Activated CD4-positive, alpha-beta memory T cell treated with anti-CD3 and anti-CD28 coated beads, Interleukin-2, amount 10 ng/mL, durations not matched to agents 7 days and 5 days (primary cell): ENCODE measurements at regions of chr16 and their contacts with region 1.

Region 1: DNA sequence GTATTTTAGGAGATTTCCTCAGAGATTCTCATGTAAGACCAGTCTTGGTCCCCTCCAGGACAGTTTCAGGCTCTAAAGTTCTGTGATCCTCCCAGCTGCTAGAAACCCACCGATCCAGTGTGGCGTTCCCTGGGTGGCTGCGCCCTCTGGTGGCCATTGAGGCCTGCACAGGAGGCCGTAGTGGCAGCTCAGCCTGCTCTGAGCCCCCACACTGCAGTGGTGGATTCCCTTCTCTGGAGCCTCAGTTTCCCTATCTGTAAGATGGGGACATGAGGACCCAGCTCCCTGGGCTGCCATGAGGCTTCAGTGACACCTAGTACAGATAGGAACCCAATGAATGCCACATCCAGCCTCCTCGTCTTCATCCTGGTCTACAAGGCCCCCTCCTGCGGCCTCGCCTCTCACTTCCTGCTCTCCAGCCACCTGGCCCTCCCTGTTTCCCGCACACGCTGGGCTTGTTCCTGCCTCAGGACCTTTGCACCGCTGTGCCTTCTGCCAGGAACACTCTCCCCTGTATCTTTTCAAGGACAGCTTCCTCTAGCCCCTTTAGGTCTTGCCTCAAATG is 16.5 kb downstream of the CCDC102A start:
- DNase-seq: peak; percentile 81
- H3K4me3 Mint-ChIP-seq: no peak overlapping the region
- H3K27ac Mint-ChIP-seq: no peak overlapping the region
- H3K4me1 Mint-ChIP-seq: peaks cover 17% of the 10 kb centered on the region
- H3K27me3 Mint-ChIP-seq: no peaks in the 10 kb centered on the region

Region 2: DNA sequence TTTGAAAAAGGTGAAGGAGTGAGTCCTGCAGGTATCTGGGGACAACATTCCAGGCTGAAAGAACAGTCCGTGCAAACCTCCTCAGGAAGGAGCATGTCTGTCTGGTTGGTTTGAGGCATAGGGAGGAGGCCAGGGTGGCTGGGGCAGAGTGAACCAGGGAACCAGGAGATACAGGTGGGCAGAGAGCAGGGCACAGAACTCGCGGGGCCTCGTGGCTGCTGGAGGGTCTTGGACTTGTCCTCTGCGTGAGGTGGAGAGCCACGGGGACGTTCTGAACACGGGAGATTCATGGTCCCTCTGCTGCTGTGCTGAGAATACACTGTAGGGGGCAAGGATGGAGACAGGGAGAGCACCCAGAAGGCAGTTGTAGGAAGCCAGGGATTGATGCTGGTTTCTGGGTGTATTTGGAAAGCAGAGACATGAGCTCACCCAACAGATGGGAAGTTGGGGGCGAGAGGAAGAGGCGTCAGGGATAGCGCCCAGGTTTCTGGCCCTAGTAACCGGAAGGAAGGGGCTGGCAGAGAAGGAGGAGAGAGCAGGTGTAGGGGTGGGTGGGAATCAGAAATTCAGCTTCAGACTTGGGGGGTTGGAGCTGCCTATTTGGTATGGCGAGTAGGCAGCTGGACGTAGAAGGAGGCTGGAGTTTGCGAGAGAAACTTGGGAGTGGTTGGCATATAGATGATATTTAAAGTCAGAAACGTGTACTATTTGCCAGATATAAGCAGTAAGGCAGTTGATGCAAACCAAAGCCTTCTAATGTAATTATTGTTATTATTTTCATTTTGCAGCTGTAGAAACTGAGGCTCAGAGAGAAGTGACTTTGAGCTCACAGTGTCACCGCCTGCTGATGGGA is 115.7 kb before region 1 on chr16 and contains the start of gene CCL17:
- CTCF ChIA-PET with region 1: no interaction called
- POLR2A ChIA-PET with region 1: no interaction called
- DNase-seq: no peak
- H3K4me3 Mint-ChIP-seq: no peak within 1 kb of the TSS
- H3K27ac Mint-ChIP-seq: no peak within 1 kb of the TSS
- H3K4me1 Mint-ChIP-seq: no peaks in the 10 kb centered on the region
- H3K27me3 Mint-ChIP-seq: peaks cover 6% of the 10 kb centered on the region
- total RNA-seq, gene CCL17: not detected

Region 3: GRCh38 chr16:57416122-57416509 is 103.8 kb before region 1 on chr16:
- CTCF ChIA-PET with region 1: interaction called, 55 read pairs
- POLR2A ChIA-PET with region 1: no interaction called
- DNase-seq: no peak
- H3K4me3 Mint-ChIP-seq: no peak overlapping the region
- H3K27ac Mint-ChIP-seq: no peak overlapping the region
- H3K4me1 Mint-ChIP-seq: peaks cover 20% of the 10 kb centered on the region
- H3K27me3 Mint-ChIP-seq: peaks cover 6% of the 10 kb centered on the region

Region 4: DNA sequence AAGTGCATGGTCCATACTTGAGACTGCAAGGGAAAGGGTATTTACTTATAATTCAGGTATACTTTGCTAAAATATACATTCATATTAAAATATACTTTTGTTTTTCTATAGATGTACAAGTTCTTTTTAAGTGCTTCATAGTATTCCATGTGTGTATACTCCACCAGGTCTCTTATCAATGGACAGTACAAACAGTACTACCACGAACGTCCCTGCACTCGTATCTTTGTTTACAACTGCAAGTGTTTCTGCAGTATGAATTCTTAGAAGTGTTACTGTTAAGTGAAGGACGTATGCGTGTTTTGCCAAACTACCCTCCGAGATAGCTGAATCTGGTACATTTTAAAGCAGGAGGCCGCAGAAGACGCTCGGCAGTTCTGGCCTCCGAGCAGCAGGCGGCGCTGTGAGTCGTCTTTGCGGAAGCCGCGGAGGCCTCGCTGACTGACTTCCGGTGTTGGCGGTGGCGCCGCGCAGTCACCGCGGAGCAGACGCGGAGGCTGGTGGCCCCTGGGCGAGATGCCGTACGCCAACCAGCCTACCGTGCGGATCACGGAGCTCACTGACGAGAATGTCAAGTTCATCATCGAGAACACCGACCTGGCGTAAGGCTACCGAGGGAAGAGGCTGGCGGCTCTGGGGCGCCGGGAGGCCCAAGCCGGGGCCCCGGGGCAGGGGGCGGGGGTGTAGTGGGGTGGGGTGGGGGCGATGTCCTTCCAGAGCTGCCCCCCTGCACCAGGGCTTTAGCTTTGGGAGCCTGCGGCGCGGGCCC is 57.5 kb before region 1 on chr16 and contains the start of gene POLR2C:
- CTCF ChIA-PET with region 1: interaction called, 22 read pairs
- POLR2A ChIA-PET with region 1: interaction called, 9 read pairs
- DNase-seq: peak; percentile 93
- H3K4me3 Mint-ChIP-seq: peak within 1 kb of the TSS; percentile 99
- H3K27ac Mint-ChIP-seq: peak within 1 kb of the TSS; percentile 96
- H3K4me1 Mint-ChIP-seq: peaks cover 36% of the 10 kb centered on the region
- H3K27me3 Mint-ChIP-seq: no peaks in the 10 kb centered on the region
- total RNA-seq, gene POLR2C: 47.8 to 48.8 TPM

Region 5: DNA sequence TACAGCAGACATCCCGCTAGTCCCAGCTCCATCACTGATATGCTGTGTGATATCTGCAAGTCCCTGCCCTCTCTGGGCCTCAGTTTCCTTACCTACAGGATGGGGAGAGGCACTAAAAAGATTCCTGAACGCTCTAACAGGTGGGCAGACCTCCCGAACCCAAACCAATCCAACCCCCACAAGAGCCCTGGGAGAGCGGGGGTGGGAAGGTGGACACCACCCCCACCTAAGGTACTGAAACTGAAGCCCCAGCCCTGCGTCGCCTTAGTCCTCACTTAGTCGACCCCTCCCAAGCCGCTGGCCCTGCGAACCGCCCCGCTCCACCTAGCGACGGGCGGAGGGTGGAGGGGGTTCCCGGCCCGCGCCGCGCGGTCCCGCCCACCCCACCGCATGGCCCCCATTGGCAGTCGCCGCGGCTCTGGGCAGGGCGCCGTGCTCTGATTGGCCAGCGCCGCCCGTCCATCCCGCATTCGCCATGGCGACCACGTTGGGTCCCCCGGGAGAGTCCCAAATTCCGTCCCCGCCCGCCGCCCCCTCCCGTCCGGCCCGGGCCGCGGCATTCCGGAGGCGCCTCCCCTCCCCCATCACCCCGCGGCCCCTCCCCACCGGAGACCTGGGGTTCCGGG is 15.9 kb after region 1 on chr16:
- CTCF ChIA-PET with region 1: interaction called, 27 read pairs
- POLR2A ChIA-PET with region 1: interaction called, 6 read pairs
- DNase-seq: peak; percentile 95
- H3K4me3 Mint-ChIP-seq: peak overlapping the region; percentile 79
- H3K27ac Mint-ChIP-seq: peak overlapping the region; percentile 80
- H3K4me1 Mint-ChIP-seq: peaks cover 79% of the 10 kb centered on the region
- H3K27me3 Mint-ChIP-seq: no peaks in the 10 kb centered on the region

Region 6: GRCh38 chr16:57591086-57591869 is 71.4 kb after region 1 on chr16:
- CTCF ChIA-PET with region 1: no interaction called
- POLR2A ChIA-PET with region 1: no interaction called
- DNase-seq: peak; percentile 78
- H3K4me3 Mint-ChIP-seq: peak overlapping the region; percentile 61
- H3K27ac Mint-ChIP-seq: peak overlapping the region; percentile 91
- H3K4me1 Mint-ChIP-seq: peaks cover 57% of the 10 kb centered on the region
- H3K27me3 Mint-ChIP-seq: peaks cover 3% of the 10 kb centered on the region